ENCODE measurements at regions of chr4 and their contacts with region 1.

Region 1: DNA sequence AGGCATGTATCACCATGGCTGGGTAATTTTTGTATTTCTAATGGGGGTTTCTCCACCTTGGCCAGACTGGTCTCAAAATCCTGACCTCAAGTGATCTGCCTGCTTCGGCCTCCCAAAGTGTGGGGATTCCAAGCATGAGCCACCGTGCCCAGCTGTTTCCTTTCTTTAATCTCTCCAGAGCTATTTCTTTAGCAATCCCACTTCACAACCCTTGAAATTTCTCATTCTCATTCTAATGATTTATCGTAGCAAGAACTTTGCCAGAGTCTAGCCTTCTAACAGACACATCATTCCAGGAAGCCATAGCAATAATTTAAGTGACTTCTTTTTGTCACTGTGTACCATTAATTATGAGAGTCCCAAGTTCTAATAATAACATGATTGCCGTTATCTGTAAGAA is 68.6 kb downstream of the RXFP1 start:
- DNase-seq: peak; percentile 14
- H3K4me3 ChIP-seq: no peak overlapping the region
- H3K27ac ChIP-seq: no peak overlapping the region
- H3K4me1 ChIP-seq: no peaks in the 10 kb centered on the region
- H3K27me3 ChIP-seq: no peaks in the 10 kb centered on the region
- CTCF ChIP-seq: no peak

Region 2: GRCh38 chr4:158201322-158201721 is 389.0 kb before region 1 on chr4:
- CTCF ChIA-PET with region 1: no interaction called
- POLR2A ChIA-PET with region 1: no interaction called
- intact Hi-C with region 1: no loop called
- DNase-seq: no peak
- H3K4me3 ChIP-seq: no peak overlapping the region
- H3K27ac ChIP-seq: no peak overlapping the region
- H3K4me1 ChIP-seq: no peaks in the 10 kb centered on the region
- H3K27me3 ChIP-seq: no peaks in the 10 kb centered on the region
- CTCF ChIP-seq: no peak

Region 3: GRCh38 chr4:158314756-158315487 is 275.4 kb before region 1 on chr4:
- CTCF ChIA-PET with region 1: no interaction called
- POLR2A ChIA-PET with region 1: interaction called, 14 read pairs
- intact Hi-C with region 1: no loop called
- DNase-seq: no peak
- H3K4me3 ChIP-seq: no peak overlapping the region
- H3K27ac ChIP-seq: no peak overlapping the region
- H3K4me1 ChIP-seq: no peaks in the 10 kb centered on the region
- H3K27me3 ChIP-seq: no peaks in the 10 kb centered on the region
- CTCF ChIP-seq: no peak

Region 4: GRCh38 chr4:158395889-158396288 is 194.4 kb before region 1 on chr4:
- CTCF ChIA-PET with region 1: no interaction called
- POLR2A ChIA-PET with region 1: no interaction called
- intact Hi-C with region 1: no loop called
- DNase-seq: no peak
- H3K4me3 ChIP-seq: no peak overlapping the region
- H3K27ac ChIP-seq: no peak overlapping the region
- H3K4me1 ChIP-seq: no peaks in the 10 kb centered on the region
- H3K27me3 ChIP-seq: no peaks in the 10 kb centered on the region
- CTCF ChIP-seq: no peak

Measured in A673 (cell line).